ENCODE measurements at regions of chr5 and their contacts with region 1.

Region 1: DNA sequence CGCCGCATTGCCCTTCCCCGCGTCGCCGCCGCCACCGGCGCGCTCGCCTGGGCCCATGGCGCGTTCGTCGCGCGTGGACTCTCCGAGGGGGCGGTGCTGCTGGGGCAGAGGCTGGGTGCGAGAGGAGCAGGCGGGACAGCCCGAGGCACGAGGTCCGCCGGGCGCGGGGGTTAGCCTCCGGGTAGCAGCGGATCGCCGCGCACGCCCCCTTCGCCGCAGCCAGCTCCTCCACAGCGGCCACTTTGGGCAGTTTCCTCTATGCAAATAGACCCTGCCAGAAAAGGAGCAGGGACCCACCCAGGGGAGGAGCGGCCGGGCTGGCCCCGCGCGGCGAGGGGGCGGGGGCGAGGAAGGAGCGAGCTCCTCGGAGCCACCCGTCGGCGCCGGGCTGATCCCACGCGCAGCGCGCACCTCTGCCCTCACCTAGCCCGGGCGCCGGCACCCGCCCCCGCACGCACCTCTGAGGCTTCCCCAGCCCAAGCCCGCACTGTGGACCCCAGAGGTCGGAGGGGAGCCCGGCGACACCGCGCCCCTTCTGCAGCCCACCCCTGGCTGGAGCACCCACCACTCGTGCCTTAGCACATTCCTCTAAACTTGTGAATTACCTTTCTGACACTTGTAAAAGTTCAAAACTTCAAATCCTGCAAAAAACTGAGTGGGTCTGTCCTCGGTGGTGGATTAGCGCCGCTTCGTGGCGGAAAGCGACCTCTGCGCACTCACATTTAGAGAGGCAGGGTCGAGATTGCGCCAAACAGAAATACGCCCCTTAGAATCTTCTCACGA is at the start of gene COL23A1:
- DNase-seq: peak; percentile 75 to 87 (median 80)
- ATAC-seq: peak; percentile 64 to 91 (median 86)
- H3K4me3 ChIP-seq: peak within 1 kb of the TSS; percentile 17 to 66 (median 56)
- H3K27ac ChIP-seq: peak within 1 kb of the TSS in 11 of 12 donors; percentile 54 to 86 (median 78)
- H3K4me1 ChIP-seq: peaks cover 0 to 39% (median 15%) of the 10 kb centered on the region in 12 donors
- H3K27me3 ChIP-seq: peaks cover 0 to 21% (median 9%) of the 10 kb centered on the region in 9 donors
- CTCF ChIP-seq: peak; percentile 41 to 80 (median 66)
- POLR2A ChIP-seq: no peak
- total RNA-seq, gene COL23A1: 6.0 to 33.0 (median 21.2) TPM

Region 2: GRCh38 chr5:178232124-178232919 is 358.0 kb before region 1 on chr5 and contains the start of gene PHYKPL:
- intact Hi-C with region 1: loop called in 3 of 10 experiments (anchors 1 to 2 kb)
- DNase-seq: peak; percentile 69 to 89 (median 81)
- ATAC-seq: peak; percentile 29 to 81 (median 70)
- H3K4me3 ChIP-seq: peak within 1 kb of the TSS; percentile 59 to 97 (median 73)
- H3K27ac ChIP-seq: peak within 1 kb of the TSS; percentile 82 to 99 (median 98)
- H3K4me1 ChIP-seq: peaks cover 5 to 67% (median 39%) of the 10 kb centered on the region in 12 donors
- H3K27me3 ChIP-seq: no peaks in the 10 kb centered on the region
- CTCF ChIP-seq: peak in 2 of 12 donors; percentile 15 to 17
- POLR2A ChIP-seq: peak in 1 of 2 donors; percentile 54
- total RNA-seq, gene PHYKPL: 33.3 to 56.2 (median 38.6) TPM

Region 3: DNA sequence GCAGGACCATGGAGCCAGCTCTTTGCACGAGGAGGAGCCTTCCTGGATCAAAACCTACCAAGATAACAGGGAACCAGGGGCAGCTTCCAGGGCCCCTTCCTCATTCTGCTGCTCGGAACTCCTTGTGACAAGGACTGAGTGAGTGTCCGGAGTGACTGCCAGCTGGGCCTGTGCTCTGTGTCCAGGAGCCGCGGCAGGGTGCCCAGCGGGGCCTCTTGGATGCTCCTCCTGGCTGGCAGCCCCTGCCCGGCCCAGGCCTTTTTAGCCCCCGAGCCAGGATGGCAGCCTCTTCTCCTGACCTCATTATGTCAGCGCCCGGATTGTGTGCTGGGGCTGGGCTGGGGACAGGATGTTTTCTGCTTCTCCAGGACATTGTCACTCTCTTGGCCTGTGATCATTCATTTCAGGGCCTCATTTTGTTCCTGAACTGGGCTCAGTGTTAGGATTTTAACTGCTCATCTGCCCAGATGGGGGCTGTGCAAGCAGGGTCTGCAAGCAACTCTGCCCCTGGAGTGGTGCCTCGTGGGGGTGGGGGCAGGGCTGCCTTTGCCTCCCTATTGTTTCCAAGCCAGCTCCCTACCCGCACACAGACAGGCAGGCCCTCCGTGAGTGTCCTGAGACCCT is 161.9 kb before region 1 on chr5:
- intact Hi-C with region 1: loop called in 1 of 10 experiments (anchors 2 kb)
- DNase-seq: peak; percentile 61 to 91 (median 85)
- ATAC-seq: peak; percentile 91 to 93 (median 91)
- H3K4me3 ChIP-seq: no peak overlapping the region
- H3K27ac ChIP-seq: peak overlapping the region; percentile 46 to 97 (median 76)
- H3K4me1 ChIP-seq: peaks cover 0 to 16% (median 4%) of the 10 kb centered on the region in 12 donors
- H3K27me3 ChIP-seq: no peaks in the 10 kb centered on the region
- CTCF ChIP-seq: no peak
- POLR2A ChIP-seq: no peak

Region 4: DNA sequence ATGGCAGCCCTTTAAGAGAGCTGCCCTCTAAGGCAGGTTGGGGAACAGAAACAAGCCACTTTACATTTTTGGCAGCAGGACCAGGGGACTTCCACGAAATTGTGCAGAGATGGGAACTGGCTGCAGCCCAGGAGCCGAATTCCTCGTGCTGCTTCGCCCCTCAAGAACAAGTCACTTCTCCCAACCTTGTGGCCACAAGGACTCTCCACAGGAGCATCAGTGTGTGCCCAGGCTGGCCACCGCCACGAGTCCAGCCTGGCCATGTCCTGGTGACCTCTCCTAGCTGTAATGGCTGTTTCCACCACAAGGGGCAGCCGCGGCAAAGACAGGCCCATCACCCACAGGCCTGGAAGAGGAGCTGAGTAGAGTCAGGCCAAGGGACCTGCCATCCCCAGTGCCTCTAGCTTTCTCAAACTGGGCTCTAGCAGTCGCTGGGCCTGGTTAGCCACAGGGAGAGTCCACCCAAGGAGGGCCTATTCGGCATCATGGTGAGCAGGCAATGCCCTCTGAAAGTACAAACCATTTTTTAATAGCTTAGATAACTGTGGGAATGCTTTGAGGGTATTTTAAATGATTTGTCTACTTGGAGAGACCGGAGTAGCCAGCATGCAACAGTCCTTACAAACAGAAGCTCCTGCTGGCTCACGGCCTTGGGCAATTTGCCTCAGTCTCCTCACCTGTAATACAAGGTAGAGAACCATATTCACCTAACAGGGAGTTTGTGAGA is 129.2 kb before region 1 on chr5:
- intact Hi-C with region 1: loop called in 1 of 10 experiments (anchors 5 kb)
- DNase-seq: peak; percentile 81 to 89 (median 86)
- ATAC-seq: peak; percentile 94 to 98 (median 95)
- H3K4me3 ChIP-seq: peak overlapping the region in 2 of 12 donors; percentile 13 to 32
- H3K27ac ChIP-seq: peak overlapping the region; percentile 34 to 87 (median 70)
- H3K4me1 ChIP-seq: peaks cover 0 to 19% (median 7%) of the 10 kb centered on the region in 12 donors
- H3K27me3 ChIP-seq: no peaks in the 10 kb centered on the region
- CTCF ChIP-seq: peak; percentile 73 to 93 (median 84)
- POLR2A ChIP-seq: no peak